ENCODE measurements at regions of chr15 and their contacts with region 1.

Region 1: DNA sequence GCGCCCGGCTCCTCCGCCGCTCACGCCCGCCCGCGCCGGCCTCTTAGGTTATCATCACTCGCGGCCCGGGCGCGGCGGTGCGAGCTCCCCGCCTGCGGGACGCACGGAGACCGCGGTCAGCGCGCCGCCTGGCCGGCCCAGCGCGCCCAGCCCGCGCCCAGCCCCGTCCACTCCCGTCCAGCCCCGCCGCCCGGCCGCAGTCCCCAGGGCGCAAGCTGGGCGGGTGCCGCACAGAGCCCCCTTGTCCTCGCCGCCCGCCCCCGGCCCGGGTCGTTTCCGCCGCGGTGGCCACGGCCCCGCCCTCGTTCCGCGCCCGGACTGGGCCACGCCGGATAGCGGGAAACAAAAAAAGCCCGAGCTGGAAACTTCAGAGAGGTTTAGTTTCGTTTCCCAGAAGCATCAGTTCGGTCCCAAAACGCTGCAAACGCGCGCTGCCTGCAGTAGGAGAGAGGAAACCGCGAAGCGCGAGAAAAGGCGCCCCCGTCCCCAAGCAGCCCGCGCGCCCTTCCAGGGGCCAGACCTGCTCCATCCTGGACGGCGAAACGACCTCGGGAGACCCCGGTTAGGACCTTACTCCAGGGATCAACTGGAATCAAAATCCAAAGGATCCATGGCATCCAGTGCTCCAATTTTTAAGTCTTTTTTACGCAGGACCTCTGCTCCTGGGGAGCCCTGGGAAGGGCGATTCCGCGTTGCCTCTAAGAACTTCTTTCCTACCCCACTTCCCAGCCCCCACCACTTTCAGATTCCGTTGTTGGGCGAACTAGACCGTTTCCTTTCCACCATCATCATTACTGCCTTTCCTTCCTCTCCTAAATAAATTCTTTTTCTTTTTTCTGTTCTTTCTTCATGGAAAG is at the start of gene ATP10A:
- DNase-seq: peak; percentile 68
- H3K4me3 Mint-ChIP-seq: peak within 1 kb of the TSS; percentile 94
- H3K27ac Mint-ChIP-seq: peak within 1 kb of the TSS; percentile 97
- H3K4me1 Mint-ChIP-seq: peaks cover 29% of the 10 kb centered on the region
- H3K27me3 Mint-ChIP-seq: no peaks in the 10 kb centered on the region
- total RNA-seq, gene ATP10A: 11.9 to 13.0 TPM

Region 2: GRCh38 chr15:25783607-25784540 is 79.5 kb before region 1 on chr15:
- CTCF ChIA-PET with region 1: interaction called, 16 read pairs
- intact Hi-C with region 1: no loop called
- DNase-seq: peak; percentile 68
- H3K4me3 Mint-ChIP-seq: no peak overlapping the region
- H3K27ac Mint-ChIP-seq: no peak overlapping the region
- H3K4me1 Mint-ChIP-seq: peaks cover 42% of the 10 kb centered on the region
- H3K27me3 Mint-ChIP-seq: no peaks in the 10 kb centered on the region

Region 3: GRCh38 chr15:25810631-25811091 is 52.7 kb before region 1 on chr15:
- CTCF ChIA-PET with region 1: interaction called, 9 read pairs
- intact Hi-C with region 1: loop called (anchors 1 kb)
- DNase-seq: peak; percentile 50
- H3K4me3 Mint-ChIP-seq: peak overlapping the region; percentile 9
- H3K27ac Mint-ChIP-seq: peak overlapping the region; percentile 82
- H3K4me1 Mint-ChIP-seq: peaks cover 73% of the 10 kb centered on the region
- H3K27me3 Mint-ChIP-seq: no peaks in the 10 kb centered on the region

Region 4: GRCh38 chr15:25850154-25851111 is 12.9 kb before region 1 on chr15:
- CTCF ChIA-PET with region 1: interaction called, 22 read pairs
- intact Hi-C with region 1: loop called (anchors 1 kb)
- DNase-seq: peak; percentile 92
- H3K4me3 Mint-ChIP-seq: peak overlapping the region; percentile 93
- H3K27ac Mint-ChIP-seq: peak overlapping the region; percentile 97
- H3K4me1 Mint-ChIP-seq: peaks cover 86% of the 10 kb centered on the region
- H3K27me3 Mint-ChIP-seq: no peaks in the 10 kb centered on the region

Region 5: DNA sequence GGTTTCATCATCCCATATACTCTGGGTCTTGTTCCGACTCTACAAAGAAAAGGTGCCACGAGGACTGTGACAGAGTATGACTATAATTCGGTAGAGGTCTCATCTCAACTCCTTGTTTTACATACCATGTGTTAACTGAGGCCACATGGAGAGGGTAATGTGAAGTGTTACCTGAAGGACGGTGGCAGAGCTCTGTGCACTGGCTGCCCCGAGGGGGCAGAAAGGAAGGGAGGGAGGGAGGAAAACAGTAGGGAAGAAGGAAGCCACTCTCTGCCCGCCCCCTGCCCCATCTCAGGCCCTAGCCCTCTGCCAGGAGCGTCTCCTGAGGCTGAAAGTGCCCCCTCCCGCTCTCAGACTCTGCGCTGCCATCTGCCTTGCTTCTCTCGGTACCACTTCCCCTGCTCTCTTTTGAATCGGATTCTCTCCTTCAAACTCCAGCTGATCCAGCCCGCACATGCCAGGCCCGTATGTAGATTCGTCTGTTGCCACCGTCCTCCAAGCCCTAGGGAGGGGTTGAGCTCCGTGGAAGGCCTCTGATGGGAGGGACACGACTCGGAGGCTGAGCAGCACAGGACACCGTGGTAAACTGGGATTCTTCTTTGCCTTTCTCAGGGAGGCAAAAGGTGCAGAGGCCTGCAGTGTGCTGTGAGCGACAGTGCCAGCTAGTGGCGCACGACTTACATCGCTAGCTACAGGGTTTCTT is 70.3 kb after region 1 on chr15:
- CTCF ChIA-PET with region 1: interaction called, 14 read pairs
- intact Hi-C with region 1: loop called (anchors 1 kb)
- DNase-seq: peak; percentile 85
- H3K4me3 Mint-ChIP-seq: peak overlapping the region; percentile 82
- H3K27ac Mint-ChIP-seq: peak overlapping the region; percentile 60
- H3K4me1 Mint-ChIP-seq: peaks cover 6% of the 10 kb centered on the region
- H3K27me3 Mint-ChIP-seq: peaks cover 2% of the 10 kb centered on the region

Measured in activated naive CD4-positive, alpha-beta T cell treated with anti-CD3 and anti-CD28 coated beads for 36 hours (primary cell).